Activated naive CD4-positive, alpha-beta T cell treated with anti-CD3 and anti-CD28 coated beads for 36 hours (primary cell): ENCODE measurements at regions of chrX and their contacts with region 1.

Region 1: GRCh38 chrX:107118322-107119147 is at the start of gene RBM41:
- DNase-seq: peak; percentile 82
- H3K4me3 Mint-ChIP-seq: peak within 1 kb of the TSS; percentile 99
- H3K27ac Mint-ChIP-seq: peak within 1 kb of the TSS; percentile 95
- H3K4me1 Mint-ChIP-seq: peaks cover 24% of the 10 kb centered on the region
- H3K27me3 Mint-ChIP-seq: no peaks in the 10 kb centered on the region
- total RNA-seq, gene RBM41: 10.4 to 11.1 TPM

Region 2: GRCh38 chrX:107135049-107135964 is 16.8 kb after region 1 on chrX:
- CTCF ChIA-PET with region 1: no interaction called
- intact Hi-C with region 1: loop called (anchors 1 kb)
- DNase-seq: peak; percentile 41
- H3K4me3 Mint-ChIP-seq: no peak overlapping the region
- H3K27ac Mint-ChIP-seq: peak overlapping the region; percentile 67
- H3K4me1 Mint-ChIP-seq: peaks cover 9% of the 10 kb centered on the region
- H3K27me3 Mint-ChIP-seq: no peaks in the 10 kb centered on the region

Region 3: DNA sequence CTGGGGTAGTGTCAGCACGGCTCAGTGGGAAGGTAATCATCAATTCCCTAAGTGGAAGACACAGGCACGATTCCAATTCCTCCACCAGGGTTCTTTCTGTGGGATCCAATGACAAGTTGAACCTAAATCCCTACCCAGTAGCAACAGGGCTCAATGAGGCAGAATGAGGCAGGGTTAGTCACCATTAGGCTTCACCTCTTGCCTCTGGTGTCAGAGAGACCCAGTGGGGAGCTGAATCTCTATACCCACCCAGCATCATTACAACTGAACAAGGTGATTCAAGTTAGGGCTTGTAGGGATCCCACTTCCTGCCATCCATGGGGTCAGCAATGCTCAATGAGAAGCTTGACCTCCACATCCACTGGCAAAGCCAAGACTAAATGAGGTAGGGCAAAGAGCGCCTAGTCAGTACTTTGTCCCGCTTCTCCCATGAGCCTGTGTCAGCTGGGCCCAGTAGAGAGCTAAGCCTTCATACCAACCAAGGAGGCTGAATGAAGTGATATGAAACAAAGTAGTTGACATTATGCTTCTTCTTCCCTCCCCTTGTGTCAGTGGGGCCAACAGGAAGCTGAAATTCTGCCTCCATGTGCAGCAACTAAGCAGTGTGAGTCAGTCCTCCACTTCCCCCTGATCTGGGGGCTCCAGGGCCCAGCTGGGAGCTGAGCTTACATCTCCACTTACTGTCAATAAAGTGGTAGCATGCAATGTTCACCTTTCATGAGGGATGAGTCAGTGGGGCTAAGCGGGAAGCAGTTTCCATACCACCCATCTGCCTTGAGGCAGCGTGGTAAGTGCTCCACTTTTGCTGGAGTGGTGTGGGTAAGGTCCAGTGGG is 36.5 kb after region 1 on chrX:
- CTCF ChIA-PET with region 1: no interaction called
- intact Hi-C with region 1: loop called (anchors 5 kb)
- DNase-seq: peak; percentile 56
- H3K4me3 Mint-ChIP-seq: peak overlapping the region; percentile 59
- H3K27ac Mint-ChIP-seq: no peak overlapping the region
- H3K4me1 Mint-ChIP-seq: peaks cover 5% of the 10 kb centered on the region
- H3K27me3 Mint-ChIP-seq: no peaks in the 10 kb centered on the region

Region 4: DNA sequence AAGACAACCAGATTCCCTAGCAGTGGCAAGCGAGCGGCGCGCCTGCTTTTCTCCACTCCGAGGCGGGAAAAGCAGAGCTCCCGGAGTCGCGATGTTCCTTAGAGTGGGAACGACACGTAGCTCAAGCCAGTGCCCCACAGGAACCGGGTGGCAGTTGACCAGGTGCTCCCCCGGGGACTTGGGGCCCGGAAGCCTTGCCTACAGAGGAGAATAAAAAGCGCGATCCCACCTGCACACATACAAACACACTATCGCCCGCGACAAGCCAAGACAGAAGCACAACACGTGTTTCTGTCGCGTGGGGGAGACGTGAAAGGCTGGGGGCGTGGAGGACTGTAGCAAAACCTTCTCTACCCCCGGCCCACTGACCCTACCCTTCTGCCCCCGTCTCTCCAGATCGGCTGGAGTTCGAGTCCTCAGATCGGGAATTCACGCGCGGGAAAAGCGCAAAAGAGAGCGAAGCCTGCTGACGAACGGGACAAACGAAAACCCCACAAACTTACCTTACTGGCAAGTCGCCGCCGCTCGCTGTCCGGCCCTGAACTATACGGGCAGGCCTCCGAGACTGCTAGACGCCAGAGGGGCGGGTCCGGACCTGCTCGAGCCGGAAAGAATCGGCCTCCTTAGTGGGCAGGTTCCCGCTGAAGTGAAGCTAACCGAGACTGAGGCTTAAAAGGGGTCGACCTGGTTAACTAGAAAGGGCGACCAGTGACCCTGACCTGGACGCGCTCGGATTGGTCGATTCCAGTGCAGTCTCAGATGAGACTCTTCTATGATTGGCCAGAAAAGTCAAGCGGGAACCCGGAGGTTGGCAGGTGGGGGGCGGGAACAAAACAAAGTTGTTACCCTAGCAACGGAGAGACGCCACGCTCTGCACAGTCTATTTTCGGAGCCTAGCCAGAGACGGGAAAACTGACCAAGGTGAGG is 87.5 kb after region 1 on chrX and contains the starts of genes DNAAF6 and NUP62CL:
- CTCF ChIA-PET with region 1: no interaction called
- intact Hi-C with region 1: loop called (anchors 1 kb)
- DNase-seq: peak; percentile 77
- H3K4me3 Mint-ChIP-seq: peak within 1 kb of the TSS; percentile 85
- H3K27ac Mint-ChIP-seq: no peak within 1 kb of the TSS
- H3K4me1 Mint-ChIP-seq: peaks cover 2% of the 10 kb centered on the region
- H3K27me3 Mint-ChIP-seq: peaks cover 2% of the 10 kb centered on the region
- total RNA-seq, gene DNAAF6: not detected
- total RNA-seq, gene NUP62CL: 3.6 TPM

Region 5: DNA sequence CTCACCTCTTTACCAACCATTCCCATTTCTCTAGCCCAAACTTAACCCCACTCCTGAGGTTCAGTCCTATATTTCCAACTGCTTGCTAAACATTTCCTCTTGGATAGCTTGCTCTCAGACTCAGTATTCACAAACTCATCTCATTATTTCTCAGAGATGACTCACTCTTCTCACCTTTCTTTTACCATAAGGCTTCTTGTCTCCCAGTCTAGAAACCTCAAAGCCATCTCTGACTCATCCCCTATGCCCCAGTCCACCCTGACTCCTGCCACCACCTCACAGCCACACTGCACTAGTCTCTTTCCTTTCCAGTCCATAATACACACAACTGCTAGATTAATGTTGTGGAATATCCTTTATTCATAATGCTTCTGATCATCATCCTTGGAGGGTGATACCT is 335.8 kb after region 1 on chrX:
- CTCF ChIA-PET with region 1: no interaction called
- intact Hi-C with region 1: loop called (anchors 2 kb)
- DNase-seq: peak; percentile 59
- H3K4me3 Mint-ChIP-seq: no peak overlapping the region
- H3K27ac Mint-ChIP-seq: no peak overlapping the region
- H3K4me1 Mint-ChIP-seq: peaks cover 14% of the 10 kb centered on the region
- H3K27me3 Mint-ChIP-seq: peaks cover 32% of the 10 kb centered on the region

Region 6: GRCh38 chrX:108091266-108091877 is 972.8 kb after region 1 on chrX and contains the starts of genes ATG4A and PSMD10:
- CTCF ChIA-PET with region 1: no interaction called
- intact Hi-C with region 1: loop called (anchors 2 kb)
- DNase-seq: peak; percentile 94
- H3K4me3 Mint-ChIP-seq: no peak within 1 kb of the TSS
- H3K27ac Mint-ChIP-seq: no peak within 1 kb of the TSS
- H3K4me1 Mint-ChIP-seq: peaks cover 19% of the 10 kb centered on the region
- H3K27me3 Mint-ChIP-seq: no peaks in the 10 kb centered on the region
- total RNA-seq, gene ATG4A: 8.2 to 8.6 TPM
- total RNA-seq, gene PSMD10: 54.6 to 58.8 TPM